Dendritic cell treated with granulocyte-macrophage colony-stimulating factor and Interleukin-4, amounts not matched to agents 40 ng/mL and 50 ng/mL, for 4 days (primary cell): ENCODE measurements at regions of chr3 and their contacts with region 1.

Region 1: DNA sequence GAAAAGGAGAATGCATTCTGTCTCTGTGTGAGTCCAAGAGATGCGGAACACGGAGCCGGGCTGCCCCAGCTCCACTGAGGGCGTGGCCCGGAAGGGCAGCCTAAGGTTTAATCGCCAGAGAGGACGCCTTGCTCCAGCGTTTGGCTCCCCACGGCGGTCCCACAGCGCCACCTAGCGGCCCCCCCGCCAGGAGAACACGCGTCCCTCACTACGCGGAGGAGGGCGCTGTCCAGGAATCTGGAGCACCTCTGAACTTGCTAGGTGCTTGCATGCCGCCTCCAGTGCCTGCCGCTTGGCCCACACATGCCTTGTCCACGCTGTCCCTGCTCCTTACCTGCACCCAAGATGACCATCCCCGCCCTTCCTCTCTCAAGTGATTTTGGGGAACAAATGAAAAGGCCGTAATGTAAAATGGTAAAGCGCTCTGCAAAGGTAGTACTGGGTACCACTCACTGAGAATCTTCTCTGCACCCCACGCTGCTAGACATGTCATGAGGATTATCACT is 14.4 kb upstream of the MRPS22 start:
- H3K4me3 Mint-ChIP-seq: peak overlapping the region; percentile 59
- H3K27ac Mint-ChIP-seq: no peak overlapping the region
- H3K4me1 Mint-ChIP-seq: peaks cover 9% of the 10 kb centered on the region
- H3K27me3 Mint-ChIP-seq: peaks cover 25% of the 10 kb centered on the region

Region 2: DNA sequence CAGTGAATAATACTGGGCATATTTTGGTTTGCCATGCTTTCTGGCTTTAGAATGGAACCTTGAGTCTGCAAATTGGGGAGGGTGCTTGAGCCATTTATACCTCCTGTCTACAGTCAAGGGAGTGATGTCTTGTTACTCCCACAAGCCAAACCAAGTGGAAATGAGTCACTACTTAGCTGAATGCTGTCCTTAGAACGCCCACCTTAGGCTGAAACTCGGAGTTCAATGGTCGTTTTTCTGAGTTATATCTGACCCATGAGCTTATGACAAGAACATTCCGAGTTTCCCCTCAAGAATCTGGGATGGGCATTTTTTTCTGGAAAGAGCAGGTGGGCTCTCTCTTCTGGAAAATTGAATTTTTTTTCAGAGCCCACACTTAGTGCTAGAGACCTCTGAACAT is 1336.8 kb before region 1 on chr3:
- intact Hi-C with region 1: no loop called
- H3K4me3 Mint-ChIP-seq: no peak overlapping the region
- H3K27ac Mint-ChIP-seq: no peak overlapping the region
- H3K4me1 Mint-ChIP-seq: peaks cover 5% of the 10 kb centered on the region
- H3K27me3 Mint-ChIP-seq: peaks cover 2% of the 10 kb centered on the region

Region 3: GRCh38 chr3:138941259-138941885 is 388.0 kb before region 1 on chr3:
- intact Hi-C with region 1: loop called (anchors 1 kb)
- H3K4me3 Mint-ChIP-seq: no peak overlapping the region
- H3K27ac Mint-ChIP-seq: no peak overlapping the region
- H3K4me1 Mint-ChIP-seq: peaks cover 61% of the 10 kb centered on the region
- H3K27me3 Mint-ChIP-seq: peaks cover 96% of the 10 kb centered on the region

Region 4: DNA sequence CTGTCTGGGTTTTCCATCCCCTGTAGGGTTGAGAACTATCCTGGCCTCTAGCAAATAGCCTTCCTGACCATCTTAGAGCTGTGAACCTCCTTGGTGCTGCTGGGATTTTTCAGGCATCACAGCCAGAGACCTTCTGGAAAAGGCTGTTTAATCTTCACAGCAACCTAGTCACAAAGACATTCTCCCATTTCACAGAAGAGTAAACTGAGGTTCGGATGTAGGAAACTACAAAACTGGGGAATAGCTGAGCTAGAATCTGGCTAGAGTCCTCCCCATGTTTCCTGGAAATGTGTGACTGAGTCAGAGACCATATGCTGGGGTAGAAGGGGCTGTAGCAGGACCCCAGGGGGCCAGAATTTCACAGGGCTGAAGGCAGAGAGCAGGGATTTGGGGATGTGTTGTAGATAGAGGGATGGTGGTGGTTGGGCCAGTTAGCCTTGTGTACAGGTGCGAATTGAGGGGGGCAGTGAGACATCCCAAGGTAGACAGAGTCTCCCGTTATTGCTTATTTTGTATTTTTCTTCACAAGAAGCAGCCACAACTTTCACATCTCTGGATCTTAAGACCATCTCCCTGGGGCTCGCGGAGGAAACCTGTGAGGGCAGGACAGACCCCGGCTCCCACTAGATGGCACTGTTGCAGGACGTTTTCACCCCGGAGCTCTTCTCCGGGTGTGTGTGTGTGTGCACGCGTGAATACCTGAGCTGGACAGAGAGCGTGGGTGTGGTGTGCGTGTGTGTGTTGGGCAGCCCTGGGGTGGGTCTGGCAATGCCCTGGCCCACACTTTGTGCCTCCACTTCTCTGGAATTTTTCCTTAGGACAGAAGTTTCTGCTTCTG is 217.8 kb before region 1 on chr3:
- intact Hi-C with region 1: loop called (anchors 2 kb)
- H3K4me3 Mint-ChIP-seq: no peak overlapping the region
- H3K27ac Mint-ChIP-seq: no peak overlapping the region
- H3K4me1 Mint-ChIP-seq: peaks cover 7% of the 10 kb centered on the region
- H3K27me3 Mint-ChIP-seq: peaks cover 2% of the 10 kb centered on the region

Region 5: DNA sequence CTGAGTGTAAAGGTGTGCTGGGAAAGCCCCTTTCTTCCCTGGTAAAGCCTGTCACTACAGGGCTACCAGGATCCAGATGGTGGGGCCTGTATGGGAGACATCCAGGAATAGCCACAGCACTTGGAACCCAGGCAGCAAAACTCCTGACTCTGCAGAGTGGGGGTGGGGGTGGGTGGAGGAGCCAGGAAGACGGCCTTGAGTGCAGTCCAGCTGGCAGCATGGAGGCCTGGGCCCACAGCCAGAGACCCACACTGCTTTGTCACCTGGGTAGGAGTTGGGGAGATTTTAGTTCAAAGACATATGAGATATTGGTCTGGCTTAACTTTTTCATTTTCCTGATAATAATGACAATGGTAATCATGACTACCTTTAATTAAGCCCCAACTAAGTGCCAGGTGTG is 102.2 kb before region 1 on chr3:
- intact Hi-C with region 1: no loop called
- H3K4me3 Mint-ChIP-seq: no peak overlapping the region
- H3K27ac Mint-ChIP-seq: no peak overlapping the region
- H3K4me1 Mint-ChIP-seq: peaks cover 6% of the 10 kb centered on the region
- H3K27me3 Mint-ChIP-seq: no peaks in the 10 kb centered on the region